ENCODE measurements at regions of chr15 and their contacts with region 1.

Region 1: DNA sequence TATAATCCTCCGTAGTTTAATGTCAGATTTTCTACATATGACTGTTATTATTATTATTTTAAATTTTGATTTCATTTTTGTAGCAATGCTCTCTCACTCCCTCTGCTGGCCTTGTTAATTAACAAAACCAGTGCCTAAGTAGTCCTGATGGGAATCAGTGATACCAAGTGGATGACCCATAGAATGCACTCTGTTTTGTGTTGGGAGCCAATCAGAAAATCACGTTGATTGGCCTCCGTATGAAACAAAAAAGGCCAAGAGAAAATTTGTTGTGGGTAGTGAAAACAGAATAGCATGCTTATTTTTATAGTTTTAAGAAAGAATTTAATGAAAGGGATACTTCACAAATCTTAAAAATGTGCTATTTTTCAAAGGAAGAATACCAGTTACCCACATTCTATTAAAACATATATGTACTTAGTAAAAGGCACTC is 34.4 kb upstream of the MEIS2 start:
- DNase-seq: peak; percentile 12
- H3K4me3 Mint-ChIP-seq: no peak overlapping the region
- H3K27ac Mint-ChIP-seq: no peak overlapping the region
- H3K4me1 Mint-ChIP-seq: no peaks in the 10 kb centered on the region
- H3K27me3 Mint-ChIP-seq: no peaks in the 10 kb centered on the region
- CTCF ChIP-seq: no peak

Region 2: GRCh38 chr15:36491912-36492311 is 642.8 kb before region 1 on chr15:
- CTCF ChIA-PET with region 1: interaction called, 13 read pairs
- intact Hi-C with region 1: no loop called
- DNase-seq: no peak
- H3K4me3 Mint-ChIP-seq: no peak overlapping the region
- H3K27ac Mint-ChIP-seq: no peak overlapping the region
- H3K4me1 Mint-ChIP-seq: peaks cover 7% of the 10 kb centered on the region
- H3K27me3 Mint-ChIP-seq: no peaks in the 10 kb centered on the region
- CTCF ChIP-seq: no peak

Region 3: DNA sequence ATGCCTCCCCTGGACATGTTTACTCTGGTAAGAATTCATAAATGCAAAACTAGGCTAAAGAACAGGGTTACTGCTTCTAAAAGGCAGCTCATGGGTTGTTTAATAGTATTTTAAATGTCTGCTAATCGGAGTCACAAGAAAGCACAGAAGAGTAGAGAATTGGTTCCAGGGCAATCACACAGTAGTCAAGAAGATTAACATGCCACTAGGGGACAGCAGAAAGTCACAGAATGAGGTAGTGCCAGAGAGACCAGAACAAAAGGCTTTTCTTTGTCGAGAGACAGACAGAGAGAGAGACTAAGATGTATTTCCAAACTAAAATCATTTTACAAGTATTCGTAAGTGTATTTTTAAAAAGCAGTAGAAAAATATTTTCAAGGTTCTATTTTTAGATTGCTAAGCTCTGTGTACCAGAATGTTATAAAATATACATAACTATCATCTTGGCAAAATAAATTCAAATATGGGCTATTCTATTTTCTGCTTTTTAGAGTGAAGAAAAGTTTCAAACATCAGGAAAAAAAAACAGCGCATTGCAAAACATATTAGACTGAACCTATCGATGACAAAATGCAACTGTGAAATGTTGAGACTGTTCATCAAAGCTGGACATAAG is 633.5 kb before region 1 on chr15:
- CTCF ChIA-PET with region 1: no interaction called
- intact Hi-C with region 1: loop called (anchors 5 kb)
- DNase-seq: peak; percentile 7
- H3K4me3 Mint-ChIP-seq: no peak overlapping the region
- H3K27ac Mint-ChIP-seq: no peak overlapping the region
- H3K4me1 Mint-ChIP-seq: peaks cover 19% of the 10 kb centered on the region
- H3K27me3 Mint-ChIP-seq: no peaks in the 10 kb centered on the region
- CTCF ChIP-seq: no peak

Region 4: GRCh38 chr15:36645106-36645505 is 489.6 kb before region 1 on chr15:
- CTCF ChIA-PET with region 1: no interaction called
- intact Hi-C with region 1: loop called (anchors 10 kb)
- DNase-seq: no peak
- H3K4me3 Mint-ChIP-seq: no peak overlapping the region
- H3K27ac Mint-ChIP-seq: no peak overlapping the region
- H3K4me1 Mint-ChIP-seq: peaks cover 9% of the 10 kb centered on the region
- H3K27me3 Mint-ChIP-seq: no peaks in the 10 kb centered on the region
- CTCF ChIP-seq: no peak

Region 5: GRCh38 chr15:36883713-36884517 is 250.8 kb before region 1 on chr15:
- CTCF ChIA-PET with region 1: no interaction called
- intact Hi-C with region 1: loop called (anchors 1 kb)
- DNase-seq: peak; percentile 68
- H3K4me3 Mint-ChIP-seq: peak overlapping the region; percentile 55
- H3K27ac Mint-ChIP-seq: no peak overlapping the region
- H3K4me1 Mint-ChIP-seq: peaks cover 7% of the 10 kb centered on the region
- H3K27me3 Mint-ChIP-seq: no peaks in the 10 kb centered on the region
- CTCF ChIP-seq: peak; percentile 40

Region 6: GRCh38 chr15:37548116-37548515 is 413.4 kb after region 1 on chr15:
- CTCF ChIA-PET with region 1: no interaction called
- intact Hi-C with region 1: no loop called
- DNase-seq: no peak
- H3K4me3 Mint-ChIP-seq: no peak overlapping the region
- H3K27ac Mint-ChIP-seq: no peak overlapping the region
- H3K4me1 Mint-ChIP-seq: no peaks in the 10 kb centered on the region
- H3K27me3 Mint-ChIP-seq: no peaks in the 10 kb centered on the region
- CTCF ChIP-seq: no peak

Region 7: DNA sequence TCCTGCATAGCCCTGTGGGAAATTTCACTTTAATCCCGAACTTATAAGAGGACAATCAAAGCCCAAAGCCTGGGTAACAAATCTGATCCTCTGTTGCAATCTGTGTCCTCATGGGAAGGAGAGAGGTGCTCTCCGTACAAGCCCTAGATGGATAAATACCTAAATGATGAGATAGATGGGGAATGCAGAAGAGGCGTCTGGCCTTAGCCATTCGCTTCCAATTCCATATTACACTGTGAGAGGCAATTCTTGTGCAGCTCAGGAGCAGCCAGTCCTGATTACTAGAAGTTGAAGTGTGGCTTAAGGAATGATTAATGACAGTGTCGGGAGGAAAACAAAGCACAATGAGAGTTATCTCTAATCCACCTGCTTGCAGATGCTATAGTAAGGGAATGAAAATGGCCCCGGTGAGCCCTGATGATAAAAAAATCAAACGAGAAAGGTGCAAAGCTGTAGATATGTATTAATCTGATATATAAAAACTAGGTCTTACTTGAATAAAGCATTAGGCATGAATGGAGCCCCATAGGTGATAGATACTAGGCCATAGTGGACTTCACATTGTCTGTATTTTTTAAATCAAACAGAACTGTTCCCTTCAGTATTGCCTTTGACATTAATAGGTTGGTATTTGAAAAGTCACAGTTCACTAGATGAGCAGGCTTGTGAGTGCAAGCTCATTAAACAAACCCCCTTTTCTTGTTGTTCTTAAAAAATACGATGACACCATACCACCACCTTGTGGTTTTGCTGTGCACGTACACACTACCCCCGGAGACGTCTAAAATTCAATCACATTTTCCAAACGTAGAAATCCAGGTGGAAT is 745.5 kb after region 1 on chr15:
- CTCF ChIA-PET with region 1: no interaction called
- intact Hi-C with region 1: loop called (anchors 10 kb)
- DNase-seq: peak; percentile 18
- H3K4me3 Mint-ChIP-seq: no peak overlapping the region
- H3K27ac Mint-ChIP-seq: no peak overlapping the region
- H3K4me1 Mint-ChIP-seq: no peaks in the 10 kb centered on the region
- H3K27me3 Mint-ChIP-seq: no peaks in the 10 kb centered on the region
- CTCF ChIP-seq: no peak

Measured in Calu3 (cell line).